ENCODE measurements at regions of chr10 and their contacts with region 1.

Region 1: DNA sequence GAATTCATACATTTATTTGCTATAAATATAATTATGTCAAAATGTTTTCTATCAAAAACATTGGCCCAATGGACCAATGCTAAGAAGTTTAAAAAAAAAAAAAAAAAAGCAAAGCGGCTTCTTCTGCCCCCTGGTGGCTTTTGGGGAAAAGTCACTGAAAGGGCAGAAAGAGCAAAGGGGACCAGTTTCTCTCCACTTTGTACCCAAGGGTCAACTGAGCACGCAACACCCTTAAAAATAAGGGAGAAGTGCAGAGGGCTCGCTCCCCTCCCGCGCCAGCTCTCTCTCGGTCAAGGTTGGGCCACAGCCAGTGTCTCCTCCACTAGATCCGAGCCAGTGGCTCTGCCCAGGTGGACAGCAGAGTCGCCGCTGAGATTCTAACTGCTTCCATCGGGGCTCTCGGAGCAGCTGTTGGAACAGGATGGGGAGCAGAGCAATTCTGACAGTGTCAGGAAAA is 136.4 kb upstream of the FGFR2 start:
- DNase-seq: peak in 1 of 2 donors; percentile 42
- H3K4me3 ChIP-seq: no peak overlapping the region
- H3K27ac ChIP-seq: no peak overlapping the region
- H3K4me1 ChIP-seq: peaks cover 0 to 11% (median 0%) of the 10 kb centered on the region in 4 donors
- H3K27me3 ChIP-seq: peaks cover 0 to 25% (median 5%) of the 10 kb centered on the region in 3 donors
- CTCF ChIP-seq: peak in 5 of 7 experiments; percentile 13 to 67 (median 59)
- EP300 ChIP-seq: no peak
- POLR2A ChIP-seq: no peak

Region 2: DNA sequence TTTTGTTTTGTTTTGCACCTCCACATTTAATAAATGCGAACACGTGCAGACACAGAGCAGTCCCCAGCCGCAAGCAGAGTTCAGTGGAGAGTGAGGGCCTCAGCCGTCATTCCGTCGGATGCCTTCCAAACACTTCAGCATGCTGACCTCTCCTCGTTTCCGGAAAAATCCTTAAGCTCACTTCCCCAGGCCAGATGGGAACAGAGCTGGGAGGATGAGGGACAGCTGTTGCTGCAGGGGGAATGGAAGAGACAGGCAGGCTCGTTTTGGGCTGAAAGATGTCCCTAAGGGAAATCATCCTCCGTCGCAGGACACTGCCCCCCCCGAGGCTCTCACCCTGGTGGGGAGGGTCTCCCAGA is 119.2 kb before region 1 on chr10:
- intact Hi-C with region 1: loop called (anchors 10 kb)
- DNase-seq: peak in 1 of 2 donors; percentile 82
- H3K4me3 ChIP-seq: no peak overlapping the region
- H3K27ac ChIP-seq: no peak overlapping the region
- H3K4me1 ChIP-seq: no peaks in the 10 kb centered on the region
- H3K27me3 ChIP-seq: peaks cover 0 to 7% (median 0%) of the 10 kb centered on the region in 3 donors
- CTCF ChIP-seq: no peak
- EP300 ChIP-seq: no peak
- POLR2A ChIP-seq: no peak